A673 (cell line): ENCODE measurements at regions of chr13 and their contacts with region 1.

Region 1: GRCh38 chr13:30689691-30690110 is 45.6 kb upstream of the ALOX5AP start:
- DNase-seq: no peak
- H3K4me3 ChIP-seq: no peak overlapping the region
- H3K27ac ChIP-seq: no peak overlapping the region
- H3K4me1 ChIP-seq: no peaks in the 10 kb centered on the region
- H3K27me3 ChIP-seq: no peaks in the 10 kb centered on the region
- CTCF ChIP-seq: no peak

Region 2: DNA sequence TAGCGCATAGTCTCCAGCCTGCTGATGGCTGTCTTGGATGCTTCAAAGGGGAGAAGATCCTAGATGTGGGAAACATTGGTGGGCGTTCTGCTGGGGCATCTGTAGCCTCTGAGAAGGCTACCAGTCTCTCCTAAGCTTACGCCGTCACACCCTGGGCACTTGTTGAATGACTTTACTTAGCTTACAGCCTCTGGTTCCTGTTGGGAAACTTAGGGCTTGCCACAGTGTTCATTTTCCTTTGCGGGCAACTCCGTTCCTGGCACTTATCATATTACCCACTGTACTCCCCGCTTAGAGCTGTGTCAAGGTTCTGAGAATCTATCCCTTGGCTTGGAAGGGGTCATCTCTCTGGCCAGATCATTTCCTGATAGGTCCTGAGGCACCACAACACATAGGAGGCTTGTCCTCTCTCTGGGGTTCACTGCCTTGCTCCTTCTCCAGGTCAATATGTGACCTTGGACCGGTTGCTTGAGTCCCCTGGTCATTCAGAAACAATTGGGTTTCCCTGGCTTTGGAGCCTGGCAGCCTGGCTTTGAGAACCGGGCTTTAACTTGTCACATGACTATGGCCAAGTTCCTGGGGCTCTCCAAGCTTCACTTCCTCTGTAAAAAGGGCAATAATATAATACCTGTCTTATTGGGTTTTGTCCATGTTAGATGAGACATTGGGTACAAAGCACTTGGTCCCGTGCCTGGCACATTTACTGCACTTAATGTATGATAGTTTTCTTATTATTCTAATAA is 25.1 kb after region 1 on chr13:
- CTCF ChIA-PET with region 1: no interaction called
- POLR2A ChIA-PET with region 1: interaction called, 10 read pairs
- intact Hi-C with region 1: no loop called
- DNase-seq: no peak
- H3K4me3 ChIP-seq: no peak overlapping the region
- H3K27ac ChIP-seq: no peak overlapping the region
- H3K4me1 ChIP-seq: no peaks in the 10 kb centered on the region
- H3K27me3 ChIP-seq: no peaks in the 10 kb centered on the region
- CTCF ChIP-seq: no peak